ENCODE measurements at regions of chr6 and their contacts with region 1.

Region 1: DNA sequence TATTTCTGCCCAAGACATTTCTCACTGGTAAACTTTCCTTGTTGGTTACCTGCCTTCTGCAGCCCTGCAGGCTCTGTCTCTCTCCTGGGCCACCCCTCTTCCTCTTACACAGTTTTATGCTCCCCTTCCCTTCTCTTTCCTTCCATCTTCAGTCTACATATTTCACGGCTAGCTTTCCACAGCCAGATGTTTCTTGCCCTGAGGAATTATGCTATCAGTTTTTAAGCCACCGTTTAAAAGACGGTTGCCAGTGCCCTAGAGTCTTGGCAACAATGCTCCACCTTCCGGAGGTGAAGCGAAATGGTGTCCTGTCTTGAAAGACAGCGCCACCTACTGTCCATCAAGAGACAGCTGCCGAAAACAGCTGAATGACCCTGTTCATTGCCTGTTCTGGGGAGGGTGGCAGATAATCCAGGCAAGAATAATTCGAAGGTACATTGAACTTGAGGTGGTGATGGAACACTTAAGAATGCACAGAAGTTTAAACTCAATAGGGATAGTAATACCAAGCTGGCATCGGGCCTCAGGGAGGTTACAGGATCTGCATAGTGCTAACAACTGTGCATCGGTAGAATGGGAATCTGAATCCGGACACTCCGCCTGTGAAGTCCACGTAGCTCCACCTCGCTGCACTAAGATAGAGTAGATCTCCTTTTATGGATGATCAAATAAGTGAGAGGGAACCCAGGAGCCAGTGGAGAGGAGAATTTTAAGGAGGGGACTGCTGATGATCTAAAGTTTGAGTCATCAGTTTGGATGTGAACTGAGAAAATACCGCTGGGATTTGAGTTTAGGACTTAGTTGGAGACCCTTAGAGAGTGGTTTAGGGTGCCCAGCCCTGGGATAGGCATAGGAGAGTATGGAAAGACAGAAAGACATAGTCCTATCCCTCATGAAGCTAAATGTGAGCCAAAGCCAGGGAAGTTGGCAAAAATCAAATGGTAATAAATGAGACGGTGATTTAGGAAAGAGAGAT is 4.8 kb upstream of the TRIM40 start:
- DNase-seq: peak; percentile 71 to 88 (median 79)
- H3K4me3 ChIP-seq: no peak overlapping the region
- H3K27ac ChIP-seq: no peak overlapping the region
- H3K4me1 ChIP-seq: no peaks in the 10 kb centered on the region
- H3K27me3 ChIP-seq: peaks cover 37% of the 10 kb centered on the region
- CTCF ChIP-seq: peak; percentile 97 to 99 (median 98)
- POLR2A ChIP-seq: no peak

Region 2: GRCh38 chr6:29847871-29848630 is 283.1 kb before region 1 on chr6:
- intact Hi-C with region 1: loop called in 1 of 2 experiments (anchors 5 kb)
- DNase-seq: peak; percentile 68 to 91 (median 78)
- H3K4me3 ChIP-seq: no peak overlapping the region
- H3K27ac ChIP-seq: no peak overlapping the region
- H3K4me1 ChIP-seq: peaks cover 0 to 13% of the 10 kb centered on the region in 2 donors
- H3K27me3 ChIP-seq: peaks cover 48% of the 10 kb centered on the region
- CTCF ChIP-seq: peak; percentile 82 to 98 (median 94)
- POLR2A ChIP-seq: no peak

Region 3: GRCh38 chr6:30192076-30192475 is 60.9 kb after region 1 on chr6:
- intact Hi-C with region 1: no loop called
- DNase-seq: no peak
- H3K4me3 ChIP-seq: no peak overlapping the region
- H3K27ac ChIP-seq: no peak overlapping the region
- H3K4me1 ChIP-seq: peaks cover 4 to 7% of the 10 kb centered on the region in 2 donors
- H3K27me3 ChIP-seq: no peaks in the 10 kb centered on the region
- CTCF ChIP-seq: no peak
- POLR2A ChIP-seq: no peak

Measured in adrenal gland (tissue), 19 donors.